Caco-2 (cell line): ENCODE measurements at regions of chr16 and their contacts with region 1.

Region 1: DNA sequence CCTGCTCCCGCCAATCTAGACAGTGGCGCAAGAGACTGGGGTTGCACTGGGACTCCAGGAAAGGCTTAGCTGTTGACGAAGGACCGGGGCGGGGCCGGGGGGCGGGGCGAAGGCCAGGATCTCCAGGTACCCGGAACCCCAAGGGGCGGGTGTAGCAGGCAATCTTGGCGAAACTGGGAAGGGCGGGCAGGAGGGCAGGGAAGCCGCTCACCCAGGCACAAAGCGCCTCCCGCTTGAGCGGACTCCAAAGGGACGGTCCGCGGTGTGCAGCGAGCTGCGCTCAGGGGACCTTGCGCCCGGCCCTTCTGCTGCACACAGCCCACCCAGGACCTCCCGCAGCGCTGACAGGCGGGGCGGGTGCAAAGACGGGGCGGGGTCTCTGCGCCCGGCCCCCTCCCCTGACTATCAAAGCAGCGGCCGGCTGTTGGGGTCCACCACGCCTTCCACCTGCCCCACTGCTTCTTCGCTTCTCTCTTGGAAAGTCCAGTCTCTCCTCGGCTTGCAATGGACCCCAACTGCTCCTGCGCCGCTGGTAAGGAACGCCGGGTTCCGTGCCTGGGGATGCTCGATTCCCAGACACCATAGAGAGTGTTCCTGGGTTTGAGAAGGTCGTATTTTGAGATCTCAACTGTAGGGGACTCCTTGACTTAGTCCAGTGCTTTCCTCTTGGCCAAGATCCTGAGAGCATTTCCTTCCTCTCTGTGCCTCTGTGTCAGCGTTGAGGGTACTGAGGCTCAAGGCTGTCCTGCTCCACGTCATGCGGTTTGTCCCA is at the start of gene MT1F:
- DNase-seq: peak; percentile 88 to 97
- H3K4me3 ChIP-seq: peak within 1 kb of the TSS; percentile 69
- H3K4me3 Mint-ChIP-seq: peak within 1 kb of the TSS; percentile 81
- H3K27ac Mint-ChIP-seq: no peak within 1 kb of the TSS
- H3K4me1 ChIP-seq: peaks cover 11% of the 10 kb centered on the region
- H3K4me1 Mint-ChIP-seq: no peaks in the 10 kb centered on the region
- H3K27me3 ChIP-seq: no peaks in the 10 kb centered on the region; the same call in 1 of the 2 replicates
- H3K27me3 Mint-ChIP-seq: peaks cover 13% of the 10 kb centered on the region
- CTCF ChIP-seq: peak in 1 of 2 experiments; percentile 9
- total RNA-seq, gene MT1F: 2.8 and 12.5 TPM in 2 replicates

Region 2: DNA sequence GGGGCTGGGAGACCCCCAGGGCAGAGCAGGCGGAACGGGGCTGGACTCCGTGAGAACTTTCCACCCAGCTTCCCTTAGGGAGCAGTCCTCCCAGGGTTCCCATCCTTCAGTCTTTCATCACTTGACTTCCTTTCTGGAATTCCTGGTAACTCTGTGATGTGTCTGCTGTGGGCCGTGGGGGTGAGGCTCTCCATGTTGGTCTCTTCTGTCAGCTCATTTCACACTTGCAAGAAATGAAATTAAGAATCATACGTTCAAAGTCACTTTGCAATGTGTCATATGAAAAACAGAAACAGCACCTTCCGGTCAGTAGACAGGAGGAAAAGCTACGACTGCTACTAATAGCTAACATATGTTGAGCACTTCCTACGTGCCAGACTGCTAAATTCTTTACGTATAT is 132.5 kb before region 1 on chr16:
- CTCF ChIA-PET with region 1: interaction called, 10 read pairs
- POLR2A ChIA-PET with region 1: interaction called, 3 read pairs
- intact Hi-C with region 1: no loop called
- DNase-seq: no peak
- H3K4me3 ChIP-seq: no peak overlapping the region
- H3K4me3 Mint-ChIP-seq: no peak overlapping the region
- H3K27ac Mint-ChIP-seq: no peak overlapping the region
- H3K4me1 ChIP-seq: peaks cover 5% of the 10 kb centered on the region
- H3K4me1 Mint-ChIP-seq: peaks cover 5% of the 10 kb centered on the region
- H3K27me3 ChIP-seq: no peaks in the 10 kb centered on the region
- H3K27me3 Mint-ChIP-seq: peaks cover 15% of the 10 kb centered on the region
- CTCF ChIP-seq: no peak

Region 3: DNA sequence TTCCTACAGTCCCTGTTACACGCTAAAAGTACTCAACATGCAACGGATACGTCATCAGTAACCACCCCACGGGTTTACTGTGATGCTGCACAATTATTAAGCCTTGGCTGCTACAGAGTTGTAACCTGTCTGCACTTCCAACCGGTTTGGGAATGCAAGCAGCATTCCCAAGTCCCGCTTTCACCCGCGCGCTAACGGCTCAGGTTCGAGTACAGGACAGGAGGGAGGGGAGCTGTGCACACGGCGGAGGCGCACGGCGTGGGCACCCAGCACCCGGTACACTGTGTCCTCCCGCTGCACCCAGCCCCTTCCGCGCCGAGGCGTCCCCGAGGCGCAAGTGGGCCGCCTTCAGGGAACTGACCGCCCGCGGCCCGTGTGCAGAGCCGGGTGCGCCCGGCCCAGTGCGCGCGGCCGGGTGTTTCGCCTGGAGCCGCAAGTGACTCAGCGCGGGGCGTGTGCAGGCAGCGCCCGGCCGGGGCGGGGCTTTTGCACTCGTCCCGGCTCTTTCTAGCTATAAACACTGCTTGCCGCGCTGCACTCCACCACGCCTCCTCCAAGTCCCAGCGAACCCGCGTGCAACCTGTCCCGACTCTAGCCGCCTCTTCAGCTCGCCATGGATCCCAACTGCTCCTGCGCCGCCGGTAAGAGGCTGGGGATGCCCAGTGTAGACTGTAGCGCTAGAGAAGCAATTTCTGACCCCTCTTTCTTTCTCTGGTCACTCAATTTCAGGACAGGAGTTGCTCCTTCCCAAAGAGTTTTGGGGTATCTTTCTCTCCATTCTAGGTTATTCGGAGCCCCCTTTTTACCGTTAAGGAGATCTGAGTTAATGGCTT is 49.5 kb before region 1 on chr16 and contains the start of gene MT2A:
- CTCF ChIA-PET with region 1: interaction called, 3 read pairs
- POLR2A ChIA-PET with region 1: interaction called, 9 read pairs
- intact Hi-C with region 1: loop called (anchors 5 kb)
- DNase-seq: peak; percentile 92 to 93
- H3K4me3 ChIP-seq: peak within 1 kb of the TSS; percentile 39
- H3K4me3 Mint-ChIP-seq: peak within 1 kb of the TSS; percentile 74
- H3K27ac Mint-ChIP-seq: peak within 1 kb of the TSS; percentile 66
- H3K4me1 ChIP-seq: peaks cover 11% of the 10 kb centered on the region; the same call in 1 of the 2 replicates
- H3K4me1 Mint-ChIP-seq: peaks cover 25% of the 10 kb centered on the region
- H3K27me3 ChIP-seq: no peaks in the 10 kb centered on the region; the same call in 1 of the 2 replicates
- H3K27me3 Mint-ChIP-seq: peaks cover 3% of the 10 kb centered on the region
- CTCF ChIP-seq: no peak
- total RNA-seq, gene MT2A: 4.3 and 10.5 TPM in 2 replicates